ENCODE measurements at regions of chrX and their contacts with region 1.

Region 1: GRCh38 chrX:72121383-72121782 is 10.3 kb downstream of the RTL5 start:
- DNase-seq: no peak
- H3K4me3 Mint-ChIP-seq: peak overlapping the region; percentile 7
- H3K27ac Mint-ChIP-seq: no peak overlapping the region
- H3K4me1 Mint-ChIP-seq: peaks cover 43% of the 10 kb centered on the region
- H3K27me3 Mint-ChIP-seq: peaks cover 35% of the 10 kb centered on the region

Region 2: GRCh38 chrX:72100824-72101351 is 20.5 kb before region 1 on chrX:
- intact Hi-C with region 1: loop called (anchors 1 kb)
- DNase-seq: peak; percentile 71
- H3K4me3 Mint-ChIP-seq: peak overlapping the region; percentile 52
- H3K27ac Mint-ChIP-seq: peak overlapping the region; percentile 85
- H3K4me1 Mint-ChIP-seq: peaks cover 50% of the 10 kb centered on the region
- H3K27me3 Mint-ChIP-seq: peaks cover 40% of the 10 kb centered on the region

Measured in activated T-helper 1 cell treated with anti-CD3 and anti-CD28 coated beads, Interleukin-12 subunit alpha, Interleukin-12 subunit beta, Interleukin-2, Interleukin-4 antibody, amounts not matched to agents 30 ng/mL and 10 ng/mL and 1 ng/mL, durations not matched to agents 14 hours and 24 hours and 36 hours (primary cell).